Right cardiac atrium (tissue), 5 donors: ENCODE measurements at regions of chr2 and their contacts with region 1.

Region 1: GRCh38 chr2:160970052-160970965 is 189.9 kb upstream of the TANK start:
- DNase-seq: peak in 1 of 3 donors; percentile 65
- ATAC-seq: peak; percentile 81 to 83
- H3K4me3 ChIP-seq: peak overlapping the region; percentile 51
- H3K27ac ChIP-seq: no peak overlapping the region
- H3K4me1 ChIP-seq: no peaks in the 10 kb centered on the region
- H3K27me3 ChIP-seq: no peaks in the 10 kb centered on the region

Region 2: DNA sequence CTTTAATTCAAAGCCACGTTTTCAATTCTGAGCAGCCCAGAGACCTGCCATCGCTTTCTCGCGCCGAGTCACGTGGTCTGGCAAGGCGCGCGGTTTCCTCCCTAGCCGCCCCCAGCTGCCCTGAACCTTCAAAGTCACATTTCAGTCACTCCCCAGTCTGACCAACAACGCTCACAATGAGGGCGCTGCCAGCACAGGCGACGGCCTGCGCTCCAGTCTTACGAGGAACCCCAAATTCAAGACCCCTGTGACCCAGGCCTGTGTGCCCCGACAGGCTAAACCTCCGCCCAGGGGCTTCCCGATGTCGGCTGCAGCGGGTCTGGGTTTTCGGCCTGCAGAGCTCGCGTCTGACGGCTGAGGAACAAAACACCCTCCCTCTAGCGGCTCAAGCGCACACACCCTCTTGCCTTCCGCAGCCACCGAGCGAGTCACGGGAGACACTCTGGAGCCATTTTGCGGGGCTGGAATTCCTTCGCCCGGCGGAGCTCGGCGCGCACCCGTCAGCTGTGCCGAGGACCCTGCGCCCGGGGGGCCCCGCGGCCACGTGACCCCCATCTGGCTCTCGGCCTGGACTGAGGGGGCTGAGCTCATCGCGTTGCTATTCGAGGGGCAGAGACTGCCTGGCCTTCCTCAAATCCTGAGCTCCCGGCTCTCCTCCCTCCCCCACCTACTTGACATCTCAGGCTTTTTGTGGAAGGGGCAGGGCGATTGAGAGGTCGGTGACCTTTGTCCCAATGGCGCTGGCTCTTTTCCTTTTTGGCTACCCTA is 700.3 kb before region 1 on chr2:
- intact Hi-C with region 1: loop called in 1 of 4 experiments (anchors 10 kb)
- DNase-seq: peak; percentile 89 to 97 (median 95)
- ATAC-seq: peak; percentile 92 to 94
- H3K4me3 ChIP-seq: peak overlapping the region; percentile 47
- H3K27ac ChIP-seq: peak overlapping the region; percentile 99
- H3K4me1 ChIP-seq: peaks cover 5% of the 10 kb centered on the region
- H3K27me3 ChIP-seq: no peaks in the 10 kb centered on the region

Region 3: DNA sequence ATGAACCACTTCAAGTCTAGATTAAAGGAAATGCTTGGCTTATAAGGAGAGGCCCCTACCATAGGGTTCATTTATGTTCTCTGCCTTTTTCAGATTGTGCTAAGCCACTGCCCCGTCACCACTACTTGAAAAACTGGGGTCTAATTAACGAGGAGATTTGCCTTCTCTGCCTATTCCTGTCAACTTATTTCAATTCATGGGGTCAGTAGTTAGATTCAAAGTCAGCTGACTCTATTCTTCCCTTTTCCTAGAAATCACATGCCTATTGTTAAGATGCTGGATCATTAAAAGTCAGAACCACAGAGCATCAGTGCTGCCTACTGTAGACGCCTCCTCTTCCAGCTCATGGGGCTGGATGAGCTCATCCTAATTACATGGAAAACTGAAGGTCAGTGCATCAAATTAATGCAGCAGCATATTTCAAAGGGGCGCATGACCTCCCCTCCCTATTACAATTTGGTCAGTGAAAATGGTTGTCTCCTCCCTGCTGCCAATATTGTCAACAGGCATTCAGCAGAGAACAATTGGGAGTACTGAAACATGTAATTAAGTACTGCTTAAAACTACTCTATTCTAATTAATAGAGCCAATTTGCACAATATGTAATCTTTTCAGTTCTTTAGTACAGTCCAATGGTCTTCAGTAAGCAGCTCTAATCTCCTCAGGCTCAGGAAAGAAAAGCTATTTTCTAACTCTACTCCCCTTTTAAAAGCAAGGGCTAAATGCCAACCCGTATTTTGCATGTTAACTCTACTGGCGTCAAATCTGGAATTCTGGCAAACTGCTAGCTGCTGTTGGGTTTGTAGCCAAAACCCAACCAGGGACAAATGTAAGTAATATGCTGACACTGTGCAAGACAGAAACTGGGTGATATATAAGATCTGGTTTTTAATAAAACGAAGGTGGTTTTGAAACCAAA is 652.9 kb before region 1 on chr2:
- intact Hi-C with region 1: loop called in 3 of 4 experiments (anchors 10 kb)
- DNase-seq: peak in 2 of 3 donors; percentile 24 to 65
- ATAC-seq: peak; percentile 79
- H3K4me3 ChIP-seq: no peak overlapping the region
- H3K27ac ChIP-seq: peak overlapping the region; percentile 67
- H3K4me1 ChIP-seq: peaks cover 12% of the 10 kb centered on the region
- H3K27me3 ChIP-seq: no peaks in the 10 kb centered on the region

Region 4: GRCh38 chr2:160324161-160324800 is 646.0 kb before region 1 on chr2:
- intact Hi-C with region 1: loop called in 3 of 4 experiments (anchors 10 kb)
- DNase-seq: peak; percentile 57 to 84 (median 74)
- ATAC-seq: peak; percentile 45 to 54
- H3K4me3 ChIP-seq: no peak overlapping the region
- H3K27ac ChIP-seq: no peak overlapping the region
- H3K4me1 ChIP-seq: peaks cover 9% of the 10 kb centered on the region
- H3K27me3 ChIP-seq: no peaks in the 10 kb centered on the region

Region 5: DNA sequence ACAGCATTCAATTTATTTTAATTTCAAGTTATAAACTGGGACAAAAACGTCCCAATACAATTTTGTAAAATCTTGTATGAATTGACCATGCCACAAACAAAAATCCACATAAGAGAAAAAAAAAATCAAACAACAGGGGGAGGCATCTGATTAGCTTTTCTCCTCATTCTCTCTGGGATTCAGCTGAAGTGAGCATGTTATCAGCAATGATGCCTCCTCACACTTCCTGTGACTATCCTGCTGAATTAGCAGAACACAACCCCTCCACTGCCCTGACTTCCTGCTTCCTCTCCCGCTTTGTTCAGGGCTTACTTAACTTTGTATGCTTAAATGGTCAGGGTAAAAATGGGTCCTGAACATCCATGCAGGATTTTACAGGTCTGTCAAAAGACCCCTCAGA is 638.0 kb before region 1 on chr2:
- intact Hi-C with region 1: loop called in 3 of 4 experiments (anchors 10 kb)
- DNase-seq: no peak
- ATAC-seq: peak; percentile 73 to 79
- H3K4me3 ChIP-seq: no peak overlapping the region
- H3K27ac ChIP-seq: no peak overlapping the region
- H3K4me1 ChIP-seq: peaks cover 21% of the 10 kb centered on the region
- H3K27me3 ChIP-seq: no peaks in the 10 kb centered on the region

Region 6: GRCh38 chr2:160406591-160407392 is 563.5 kb before region 1 on chr2:
- intact Hi-C with region 1: loop called in 1 of 4 experiments (anchors 10 kb)
- DNase-seq: peak in 2 of 3 donors; percentile 43 to 83
- ATAC-seq: peak; percentile 47 to 55
- H3K4me3 ChIP-seq: peak overlapping the region; percentile 83
- H3K27ac ChIP-seq: peak overlapping the region; percentile 80
- H3K4me1 ChIP-seq: peaks cover 14% of the 10 kb centered on the region
- H3K27me3 ChIP-seq: no peaks in the 10 kb centered on the region